ENCODE measurements at regions of chr1 and their contacts with region 1.

Region 1: GRCh38 chr1:181142096-181142958 is 53.8 kb downstream of the IER5 start:
- DNase-seq: peak; percentile 89
- ATAC-seq: peak; percentile 93
- H3K4me3 ChIP-seq: peak overlapping the region; percentile 6; the same call in 1 of the 2 replicates
- H3K27ac ChIP-seq: peak overlapping the region; percentile 59
- H3K4me1 ChIP-seq: peaks cover 29% of the 10 kb centered on the region
- H3K27me3 ChIP-seq: no peaks in the 10 kb centered on the region
- CTCF ChIP-seq: peak; percentile 98
- POLR2A ChIP-seq: peak; percentile 45; the same call in 1 of the 2 replicates
- RAD21 ChIP-seq: peak; percentile 100

Region 2: GRCh38 chr1:180631766-180632325 is 510.5 kb before region 1 on chr1 and contains the start of gene XPR1:
- CTCF ChIA-PET with region 1: no interaction called
- POLR2A ChIA-PET with region 1: no interaction called
- dilution Hi-C with region 1: no loop called
- in situ Hi-C with region 1: loop called (anchors 10 kb)
- intact Hi-C with region 1: no loop called
- DNase-seq: peak; percentile 99
- ATAC-seq: peak; percentile 99
- H3K4me3 ChIP-seq: peak within 1 kb of the TSS; percentile 94
- H3K27ac ChIP-seq: peak within 1 kb of the TSS; percentile 89
- H3K4me1 ChIP-seq: no peaks in the 10 kb centered on the region
- H3K27me3 ChIP-seq: no peaks in the 10 kb centered on the region
- CTCF ChIP-seq: peak; percentile 37
- POLR2A ChIP-seq: peak; percentile 74
- RAD21 ChIP-seq: peak; percentile 47
- total RNA-seq, gene XPR1: 25.1 and 25.3 TPM in 2 replicates

Region 3: DNA sequence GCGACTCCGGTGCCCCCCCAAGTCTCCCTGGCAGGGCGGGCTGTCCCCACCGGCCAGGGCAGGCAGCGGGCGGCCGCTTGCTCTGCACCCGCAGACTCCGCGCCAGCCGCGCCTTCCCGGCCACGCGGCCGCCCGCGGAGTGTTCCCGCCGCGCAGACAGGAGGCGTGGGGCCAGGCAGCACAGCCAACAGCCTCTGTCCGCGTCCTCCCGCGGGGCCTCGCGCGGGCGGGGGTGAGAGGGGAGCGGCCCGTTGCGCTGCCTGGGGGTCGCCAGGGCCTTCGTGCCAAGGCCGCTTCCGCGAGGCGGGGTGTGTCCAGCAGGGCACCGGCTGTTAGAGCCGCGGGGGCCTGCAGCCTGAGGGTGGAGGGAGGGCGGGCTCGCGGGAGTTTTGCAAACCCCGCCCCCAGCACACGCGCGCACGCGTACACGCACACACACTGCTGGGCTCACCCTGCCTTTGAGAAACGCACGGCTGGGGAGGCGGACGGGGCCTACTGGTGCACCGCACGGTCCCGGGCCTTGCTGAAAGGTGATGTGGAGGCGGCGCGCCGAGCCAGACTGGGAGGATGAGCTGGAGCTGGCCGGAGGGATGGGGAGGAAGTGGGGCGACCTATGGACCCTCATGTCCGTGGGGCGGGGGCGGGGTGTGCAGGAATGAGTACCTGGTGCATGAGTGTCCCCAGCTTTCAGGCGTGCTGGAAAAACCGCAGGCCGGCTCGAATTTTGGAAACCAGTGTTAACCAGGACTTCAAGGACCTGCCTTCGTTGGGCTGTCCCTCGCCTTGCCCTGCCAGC is 188.1 kb before region 1 on chr1:
- CTCF ChIA-PET with region 1: no interaction called
- POLR2A ChIA-PET with region 1: no interaction called
- dilution Hi-C with region 1: no loop called
- in situ Hi-C with region 1: no loop called
- intact Hi-C with region 1: loop called (anchors 2 kb)
- DNase-seq: peak; percentile 12
- ATAC-seq: peak; percentile 75
- H3K4me3 ChIP-seq: peak overlapping the region; percentile 39
- H3K27ac ChIP-seq: no peak overlapping the region; the same call in 1 of the 2 replicates
- H3K4me1 ChIP-seq: peaks cover 4% of the 10 kb centered on the region
- H3K27me3 ChIP-seq: no peaks in the 10 kb centered on the region
- CTCF ChIP-seq: no peak
- POLR2A ChIP-seq: no peak
- RAD21 ChIP-seq: no peak

Region 4: GRCh38 chr1:181021811-181022434 is 120.4 kb before region 1 on chr1:
- CTCF ChIA-PET with region 1: interaction called, 9 read pairs
- POLR2A ChIA-PET with region 1: no interaction called
- dilution Hi-C with region 1: no loop called
- in situ Hi-C with region 1: no loop called
- intact Hi-C with region 1: loop called (anchors 5 kb)
- DNase-seq: peak; percentile 73
- ATAC-seq: peak; percentile 49
- H3K4me3 ChIP-seq: peak overlapping the region; percentile 93
- H3K27ac ChIP-seq: peak overlapping the region; percentile 78
- H3K4me1 ChIP-seq: no peaks in the 10 kb centered on the region
- H3K27me3 ChIP-seq: no peaks in the 10 kb centered on the region
- CTCF ChIP-seq: no peak
- POLR2A ChIP-seq: no peak
- RAD21 ChIP-seq: no peak

Region 5: GRCh38 chr1:181088079-181089016 is 54.0 kb before region 1 on chr1 and contains the start of gene IER5:
- CTCF ChIA-PET with region 1: interaction called, 14 read pairs
- POLR2A ChIA-PET with region 1: interaction called, 11 read pairs
- dilution Hi-C with region 1: no loop called
- in situ Hi-C with region 1: no loop called
- intact Hi-C with region 1: loop called (anchors 1 kb)
- DNase-seq: peak; percentile 95
- ATAC-seq: peak; percentile 85
- H3K4me3 ChIP-seq: peak within 1 kb of the TSS; percentile 59
- H3K27ac ChIP-seq: peak within 1 kb of the TSS; percentile 86
- H3K4me1 ChIP-seq: peaks cover 3% of the 10 kb centered on the region
- H3K27me3 ChIP-seq: no peaks in the 10 kb centered on the region
- CTCF ChIP-seq: no peak
- POLR2A ChIP-seq: peak; percentile 100
- RAD21 ChIP-seq: peak; percentile 31
- total RNA-seq, gene IER5: 15.8 and 29.4 TPM in 2 replicates

Region 6: GRCh38 chr1:181112071-181112929 is 30.0 kb before region 1 on chr1:
- CTCF ChIA-PET with region 1: interaction called, 13 read pairs
- POLR2A ChIA-PET with region 1: no interaction called
- dilution Hi-C with region 1: no loop called
- in situ Hi-C with region 1: no loop called
- intact Hi-C with region 1: no loop called
- DNase-seq: peak; percentile 100
- ATAC-seq: peak; percentile 83
- H3K4me3 ChIP-seq: no peak overlapping the region
- H3K27ac ChIP-seq: peak overlapping the region; percentile 75; the same call in 1 of the 2 replicates
- H3K4me1 ChIP-seq: peaks cover 25% of the 10 kb centered on the region
- H3K27me3 ChIP-seq: no peaks in the 10 kb centered on the region
- CTCF ChIP-seq: no peak
- POLR2A ChIP-seq: 0 out of 2 replicates have a peak, but pooled peaks have one; percentile 21
- RAD21 ChIP-seq: no peak

Region 7: DNA sequence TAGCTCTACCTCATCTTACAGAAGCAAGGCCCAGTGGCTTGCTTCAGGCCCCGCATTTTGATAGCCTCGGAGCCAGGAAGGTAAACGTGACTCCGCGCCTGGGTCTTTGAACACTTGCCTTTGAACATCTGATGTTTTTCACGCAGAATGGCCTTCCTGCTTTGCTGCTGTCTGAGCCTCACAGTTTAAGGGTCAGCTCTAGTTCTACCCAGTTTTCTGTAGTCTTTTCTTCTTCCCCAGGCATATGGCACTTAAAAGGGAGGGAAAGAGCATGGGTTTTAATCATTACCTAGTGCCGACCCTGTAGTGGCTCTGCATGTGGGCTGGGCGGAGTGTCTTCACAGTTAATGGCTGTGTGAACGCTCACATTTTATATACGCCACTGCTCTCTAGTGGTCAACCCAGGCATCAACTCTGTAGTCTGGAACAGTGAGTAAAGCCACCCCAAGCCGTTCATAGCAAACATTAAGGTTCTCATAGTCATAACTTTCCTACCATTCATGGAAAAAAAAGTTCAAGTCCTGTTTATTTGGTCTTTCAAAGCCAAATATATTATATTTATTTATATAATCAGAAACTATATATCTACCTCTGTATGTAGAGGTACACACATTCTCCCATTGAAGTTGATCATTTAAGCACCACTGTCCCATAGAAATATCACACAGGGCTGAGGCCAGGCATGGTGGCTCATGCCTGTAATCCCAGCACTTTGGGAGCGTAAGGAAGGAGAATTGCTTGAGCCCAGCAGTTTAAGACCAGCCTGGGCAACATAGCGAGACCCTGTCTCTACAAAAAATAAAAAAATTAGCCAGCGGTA is 24.3 kb after region 1 on chr1:
- CTCF ChIA-PET with region 1: no interaction called
- POLR2A ChIA-PET with region 1: no interaction called
- dilution Hi-C with region 1: no loop called
- in situ Hi-C with region 1: no loop called
- intact Hi-C with region 1: loop called (anchors 1 kb)
- DNase-seq: peak; percentile 76
- ATAC-seq: peak; percentile 100
- H3K4me3 ChIP-seq: no peak overlapping the region
- H3K27ac ChIP-seq: no peak overlapping the region
- H3K4me1 ChIP-seq: peaks cover under 1% of the 10 kb centered on the region
- H3K27me3 ChIP-seq: peaks cover 10% of the 10 kb centered on the region; the same call in 1 of the 2 replicates
- CTCF ChIP-seq: peak; percentile 95
- POLR2A ChIP-seq: no peak
- RAD21 ChIP-seq: peak; percentile 95

Region 8: DNA sequence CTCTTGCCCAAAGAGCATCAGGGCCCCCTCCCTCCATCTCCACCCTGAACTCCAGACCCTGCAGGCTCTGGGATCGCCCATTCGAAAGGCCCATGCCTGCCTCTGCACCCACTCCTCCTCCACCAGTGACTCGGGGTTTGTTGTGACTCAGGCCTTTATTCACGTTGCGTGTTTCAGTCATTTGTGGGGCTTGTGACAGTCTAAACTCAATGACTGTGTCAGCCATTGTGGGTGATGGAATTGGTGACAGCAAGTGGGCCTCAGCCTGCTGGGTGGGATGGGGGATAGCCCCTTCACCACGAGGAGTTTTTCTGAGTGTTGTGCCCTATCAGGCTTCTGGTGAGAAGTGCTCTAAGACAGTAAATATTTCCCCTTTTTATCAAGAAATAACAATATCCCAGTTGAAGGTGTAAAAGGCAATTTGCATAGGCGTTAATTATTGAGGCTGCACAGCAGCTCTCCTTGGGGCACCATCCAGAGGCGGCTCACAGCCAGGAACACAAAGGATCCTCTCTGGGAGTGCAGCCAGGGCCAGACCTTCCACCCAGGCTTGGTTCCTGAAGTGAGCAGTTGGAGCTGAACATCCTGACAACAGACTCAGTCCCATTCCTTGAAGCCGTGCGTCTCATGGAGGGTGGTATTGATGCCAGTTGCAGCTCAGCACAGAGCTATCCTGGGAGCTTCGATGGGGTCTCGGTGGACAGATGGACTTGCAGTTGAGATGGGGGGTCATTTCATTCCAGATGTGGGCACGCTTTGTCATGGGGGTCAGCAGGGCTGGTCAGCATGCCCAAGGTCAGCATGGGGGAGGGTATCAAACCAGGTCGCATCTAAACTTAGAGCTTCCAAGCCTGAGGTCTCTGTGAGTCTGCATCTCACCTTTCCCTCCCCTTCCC is 205.4 kb after region 1 on chr1:
- CTCF ChIA-PET with region 1: no interaction called
- POLR2A ChIA-PET with region 1: no interaction called
- dilution Hi-C with region 1: no loop called
- in situ Hi-C with region 1: no loop called
- intact Hi-C with region 1: no loop called
- DNase-seq: no peak
- ATAC-seq: no peak
- H3K4me3 ChIP-seq: no peak overlapping the region
- H3K27ac ChIP-seq: no peak overlapping the region
- H3K4me1 ChIP-seq: no peaks in the 10 kb centered on the region
- H3K27me3 ChIP-seq: no peaks in the 10 kb centered on the region; the same call in 1 of the 2 replicates
- CTCF ChIP-seq: no peak
- POLR2A ChIP-seq: no peak
- RAD21 ChIP-seq: no peak

Measured in IMR-90 (cell line).